Transverse colon (tissue), 4 donors: ENCODE measurements at regions of chr3 and their contacts with region 1.

Region 1: GRCh38 chr3:170726976-170727661 is 141.2 kb upstream of the SLC7A14 start:
- DNase-seq: no peak
- H3K4me3 ChIP-seq: no peak overlapping the region
- H3K27ac ChIP-seq: no peak overlapping the region
- H3K4me1 ChIP-seq: no peaks in the 10 kb centered on the region
- H3K27me3 ChIP-seq: peaks cover 4% of the 10 kb centered on the region
- CTCF ChIP-seq: no peak
- EP300 ChIP-seq: no peak
- POLR2A ChIP-seq: no peak

Region 2: DNA sequence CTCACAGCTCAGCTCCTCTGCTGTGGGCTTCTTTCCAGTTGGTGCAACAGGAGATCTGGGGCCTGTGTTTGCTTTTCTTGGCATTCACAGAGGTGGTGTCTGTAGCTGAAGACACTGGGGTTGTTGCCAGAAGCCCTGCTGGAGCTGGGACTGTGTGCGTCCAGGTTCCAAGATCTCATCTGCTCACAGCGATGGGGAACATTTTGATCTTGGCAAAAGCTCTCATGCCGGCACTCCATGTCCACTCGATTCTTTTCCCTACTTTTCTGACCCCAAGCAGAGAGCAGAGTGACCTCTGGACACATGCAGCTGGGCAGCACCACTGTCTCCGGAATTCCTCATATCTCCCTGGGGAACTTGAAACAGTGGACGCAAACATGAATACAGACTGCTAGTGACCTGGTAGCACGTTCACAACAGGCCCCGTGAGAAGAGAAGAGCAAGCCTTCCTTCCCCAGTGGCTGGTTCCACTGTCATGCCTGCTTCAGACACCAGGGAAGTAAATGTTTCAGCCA is 1027.5 kb before region 1 on chr3:
- in situ Hi-C with region 1: no loop called
- intact Hi-C with region 1: loop called (anchors 5 kb)
- DNase-seq: no peak
- H3K4me3 ChIP-seq: no peak overlapping the region
- H3K27ac ChIP-seq: peak overlapping the region in 2 of 4 donors; percentile 25 to 39
- H3K4me1 ChIP-seq: no peaks in the 10 kb centered on the region
- H3K27me3 ChIP-seq: no peaks in the 10 kb centered on the region
- CTCF ChIP-seq: no peak
- EP300 ChIP-seq: no peak
- POLR2A ChIP-seq: no peak

Region 3: GRCh38 chr3:170055209-170055608 is 671.9 kb before region 1 on chr3:
- in situ Hi-C with region 1: no loop called
- intact Hi-C with region 1: no loop called
- DNase-seq: no peak
- H3K4me3 ChIP-seq: no peak overlapping the region
- H3K27ac ChIP-seq: no peak overlapping the region
- H3K4me1 ChIP-seq: peaks cover 0 to 19% (median 0%) of the 10 kb centered on the region in 4 donors
- H3K27me3 ChIP-seq: no peaks in the 10 kb centered on the region
- CTCF ChIP-seq: no peak
- EP300 ChIP-seq: no peak
- POLR2A ChIP-seq: no peak

Region 4: DNA sequence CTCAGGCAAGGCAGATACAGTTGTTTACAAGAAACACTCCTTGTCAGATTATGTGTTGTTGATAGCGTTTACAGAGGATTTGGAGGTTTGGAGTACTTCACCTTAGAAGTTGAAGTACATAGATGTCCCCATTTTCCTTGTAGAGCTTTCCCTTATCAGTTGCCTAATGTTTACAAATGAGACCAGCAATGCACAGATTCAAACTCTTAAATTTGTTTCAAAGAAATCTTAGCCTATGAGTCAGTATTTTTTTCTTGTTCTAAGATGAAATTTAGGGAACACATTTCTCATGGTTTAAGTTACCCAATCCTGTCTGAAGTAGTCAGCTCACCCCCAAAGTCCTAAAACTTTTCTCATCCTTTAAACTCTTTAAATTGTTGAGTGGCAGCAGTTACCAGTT is 187.6 kb after region 1 on chr3:
- in situ Hi-C with region 1: no loop called
- intact Hi-C with region 1: no loop called
- DNase-seq: no peak
- H3K4me3 ChIP-seq: no peak overlapping the region
- H3K27ac ChIP-seq: no peak overlapping the region
- H3K4me1 ChIP-seq: no peaks in the 10 kb centered on the region
- H3K27me3 ChIP-seq: no peaks in the 10 kb centered on the region
- CTCF ChIP-seq: no peak
- EP300 ChIP-seq: no peak
- POLR2A ChIP-seq: no peak